ENCODE measurements at regions of chr6 and their contacts with region 1.

Region 1: GRCh38 chr6:69784595-69785377 is 12.0 kb downstream of the LMBRD1 start:
- DNase-seq: no peak
- ATAC-seq: peak; percentile 79
- H3K4me3 ChIP-seq: no peak overlapping the region; the same call in 1 of the 2 replicates
- H3K27ac ChIP-seq: peak overlapping the region; percentile 29; the same call in 1 of the 2 replicates
- H3K4me1 ChIP-seq: peaks cover 5% of the 10 kb centered on the region
- H3K27me3 ChIP-seq: no peaks in the 10 kb centered on the region
- CTCF ChIP-seq: no peak
- EP300 ChIP-seq: no peak
- POLR2A ChIP-seq: no peak
- RAD21 ChIP-seq: 0 out of 2 replicates have a peak, but pooled peaks have one; percentile 9

Region 2: GRCh38 chr6:69678834-69679233 is 106.0 kb before region 1 on chr6:
- CTCF ChIA-PET with region 1: no interaction called
- POLR2A ChIA-PET with region 1: no interaction called
- RAD21 ChIA-PET with region 1: no interaction called
- SMC1A ChIA-PET with region 1: no interaction called
- in situ Hi-C with region 1: no loop called
- intact Hi-C with region 1: no loop called
- DNase-seq: no peak
- ATAC-seq: no peak
- H3K4me3 ChIP-seq: no peak overlapping the region
- H3K27ac ChIP-seq: no peak overlapping the region
- H3K4me1 ChIP-seq: no peaks in the 10 kb centered on the region
- H3K27me3 ChIP-seq: no peaks in the 10 kb centered on the region
- CTCF ChIP-seq: no peak
- EP300 ChIP-seq: no peak
- POLR2A ChIP-seq: no peak
- RAD21 ChIP-seq: no peak

Region 3: GRCh38 chr6:69796642-69797390 is 12.0 kb after region 1 on chr6 and contains the start of gene LMBRD1:
- CTCF ChIA-PET with region 1: interaction called, 18 read pairs
- POLR2A ChIA-PET with region 1: interaction called, 5 read pairs
- RAD21 ChIA-PET with region 1: interaction called, 9 read pairs
- SMC1A ChIA-PET with region 1: interaction called, 18 read pairs
- in situ Hi-C with region 1: no loop called
- intact Hi-C with region 1: no loop called
- DNase-seq: peak; percentile 91
- ATAC-seq: peak; percentile 91
- H3K4me3 ChIP-seq: peak within 1 kb of the TSS; percentile 80
- H3K27ac ChIP-seq: peak within 1 kb of the TSS; percentile 85
- H3K4me1 ChIP-seq: peaks cover 13% of the 10 kb centered on the region
- H3K27me3 ChIP-seq: no peaks in the 10 kb centered on the region
- CTCF ChIP-seq: peak; percentile 97 to 100 (median 99); a peak in 5 of 6 replicates
- EP300 ChIP-seq: 0 out of 4 replicates have a peak, but pooled peaks of 1 of the 2 experiments have one; percentile 5
- POLR2A ChIP-seq: peak; percentile 83
- RAD21 ChIP-seq: no peak
- polyA plus RNA-seq, gene LMBRD1: 43.2 to 82.1 TPM

Region 4: DNA sequence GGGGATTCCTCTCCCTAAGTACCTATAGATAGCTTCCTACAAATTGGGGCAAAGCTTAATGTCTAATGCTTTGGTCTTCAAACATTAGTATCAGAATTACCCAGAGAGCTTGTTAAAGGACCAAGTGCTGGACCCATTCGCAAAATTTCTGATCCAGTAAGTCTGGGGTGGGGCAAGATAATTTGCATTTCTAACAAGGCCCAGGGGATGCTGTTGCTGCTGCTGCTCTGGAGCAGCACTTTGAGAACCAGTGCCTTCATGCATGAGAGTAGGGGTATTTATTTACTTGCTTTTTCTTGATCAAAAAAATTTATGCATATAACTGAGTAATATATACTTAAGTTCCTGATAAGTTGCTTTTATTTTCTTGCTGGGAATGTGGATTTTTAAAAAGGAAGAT is 57.1 kb after region 1 on chr6:
- CTCF ChIA-PET with region 1: no interaction called
- POLR2A ChIA-PET with region 1: no interaction called
- RAD21 ChIA-PET with region 1: no interaction called
- SMC1A ChIA-PET with region 1: no interaction called
- in situ Hi-C with region 1: no loop called
- intact Hi-C with region 1: no loop called
- DNase-seq: no peak
- ATAC-seq: no peak
- H3K4me3 ChIP-seq: no peak overlapping the region
- H3K27ac ChIP-seq: no peak overlapping the region
- H3K4me1 ChIP-seq: no peaks in the 10 kb centered on the region
- H3K27me3 ChIP-seq: no peaks in the 10 kb centered on the region
- CTCF ChIP-seq: no peak
- EP300 ChIP-seq: no peak
- POLR2A ChIP-seq: no peak
- RAD21 ChIP-seq: no peak

Region 5: DNA sequence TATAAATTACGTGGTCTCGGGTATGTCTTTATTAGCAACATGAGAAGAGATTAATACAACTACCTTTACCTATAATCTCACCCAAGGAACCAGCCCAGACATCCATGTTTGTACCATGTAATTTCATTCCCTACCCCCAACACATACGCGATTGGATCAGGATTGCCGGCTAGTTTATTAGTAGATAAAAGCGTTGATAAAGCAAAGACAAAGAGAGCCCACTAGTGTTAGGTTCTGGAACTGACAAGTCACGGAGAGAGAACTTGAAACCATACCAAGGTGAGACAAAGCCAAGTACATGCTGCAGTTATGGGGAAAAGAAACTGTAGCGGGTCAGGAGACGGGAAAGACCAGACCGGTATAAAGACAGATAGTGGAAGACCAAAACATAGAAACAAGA is 591.1 kb after region 1 on chr6:
- CTCF ChIA-PET with region 1: no interaction called
- POLR2A ChIA-PET with region 1: no interaction called
- RAD21 ChIA-PET with region 1: no interaction called
- SMC1A ChIA-PET with region 1: no interaction called
- in situ Hi-C with region 1: no loop called
- intact Hi-C with region 1: no loop called
- DNase-seq: no peak
- ATAC-seq: 0 out of 3 replicates have a peak, but pooled peaks have one; percentile 15
- H3K4me3 ChIP-seq: no peak overlapping the region
- H3K27ac ChIP-seq: no peak overlapping the region
- H3K4me1 ChIP-seq: no peaks in the 10 kb centered on the region; the same call in 1 of the 2 replicates
- H3K27me3 ChIP-seq: no peaks in the 10 kb centered on the region; a peak in 1 of 4 replicates
- CTCF ChIP-seq: peak; percentile 7 to 37 (median 34); a peak in 4 of 6 replicates
- EP300 ChIP-seq: no peak
- POLR2A ChIP-seq: no peak
- RAD21 ChIP-seq: peak; percentile 11; the same call in 1 of the 2 replicates